ENCODE measurements at regions of chr1 and their contacts with region 1.

Region 1: DNA sequence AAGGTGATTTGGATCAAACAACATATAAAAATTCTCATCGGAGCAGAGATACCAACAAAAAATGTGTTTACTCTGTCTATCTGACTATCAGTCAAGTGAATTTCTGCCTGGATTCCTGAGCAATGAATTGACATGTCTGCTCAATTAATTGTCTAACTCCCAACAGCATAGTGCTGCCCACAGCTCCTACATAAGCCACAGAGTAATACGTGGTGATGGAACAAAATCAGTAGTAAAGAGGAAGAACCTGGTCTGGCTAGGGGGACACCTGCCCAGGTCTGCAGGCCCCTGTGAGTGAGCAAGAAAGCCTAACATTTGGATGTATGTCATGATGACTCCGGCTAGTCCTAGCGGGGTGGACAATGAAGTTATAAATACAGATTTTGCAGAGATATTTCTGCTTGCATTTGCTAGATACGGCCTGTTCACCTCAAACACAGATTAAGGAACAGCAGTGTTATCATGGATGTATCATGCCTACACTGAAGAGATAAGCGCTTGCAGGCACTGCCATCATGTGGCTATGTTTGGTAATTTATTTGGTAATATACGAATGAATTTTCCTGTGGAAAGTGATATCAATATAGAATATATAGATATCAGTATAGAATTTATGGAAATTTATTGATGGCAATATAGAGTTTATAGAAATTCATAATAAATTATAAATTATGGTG is 69.6 kb upstream of the LRRC8B start:
- DNase-seq: peak in 2 of 4 donors; percentile 18 to 49
- ATAC-seq: peak; percentile 95
- H3K4me3 ChIP-seq: no peak overlapping the region
- H3K27ac ChIP-seq: no peak overlapping the region
- H3K4me1 ChIP-seq: no peaks in the 10 kb centered on the region
- H3K27me3 ChIP-seq: no peaks in the 10 kb centered on the region
- CTCF ChIP-seq: peak; percentile 45 to 65

Region 2: DNA sequence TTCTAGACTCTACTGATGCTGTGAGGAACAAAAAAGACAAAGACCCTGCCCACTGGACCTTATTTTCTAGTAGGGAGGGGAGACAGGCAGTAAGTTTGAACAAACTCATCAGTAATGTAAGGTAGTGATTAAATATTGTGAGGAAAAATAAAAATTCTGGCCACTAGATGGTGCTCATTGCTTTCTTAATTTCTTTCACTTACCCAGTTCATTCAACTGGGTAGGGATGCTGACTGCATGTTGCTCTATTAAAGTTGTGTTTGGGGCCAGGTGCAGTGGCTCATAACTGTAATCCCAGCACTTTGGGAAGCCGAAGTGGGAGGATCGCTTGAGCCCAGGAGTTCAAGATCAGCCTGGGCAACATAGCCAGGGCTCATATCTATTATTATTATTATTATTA is 456.3 kb before region 1 on chr1:
- intact Hi-C with region 1: loop called in 1 of 2 experiments (anchors 5 kb)
- DNase-seq: peak in 2 of 4 donors; percentile 45 to 77
- ATAC-seq: peak; percentile 97
- H3K4me3 ChIP-seq: no peak overlapping the region
- H3K27ac ChIP-seq: no peak overlapping the region
- H3K4me1 ChIP-seq: peaks cover 0 to under 1% of the 10 kb centered on the region in 2 donors
- H3K27me3 ChIP-seq: no peaks in the 10 kb centered on the region
- CTCF ChIP-seq: peak; percentile 31 to 44

Region 3: DNA sequence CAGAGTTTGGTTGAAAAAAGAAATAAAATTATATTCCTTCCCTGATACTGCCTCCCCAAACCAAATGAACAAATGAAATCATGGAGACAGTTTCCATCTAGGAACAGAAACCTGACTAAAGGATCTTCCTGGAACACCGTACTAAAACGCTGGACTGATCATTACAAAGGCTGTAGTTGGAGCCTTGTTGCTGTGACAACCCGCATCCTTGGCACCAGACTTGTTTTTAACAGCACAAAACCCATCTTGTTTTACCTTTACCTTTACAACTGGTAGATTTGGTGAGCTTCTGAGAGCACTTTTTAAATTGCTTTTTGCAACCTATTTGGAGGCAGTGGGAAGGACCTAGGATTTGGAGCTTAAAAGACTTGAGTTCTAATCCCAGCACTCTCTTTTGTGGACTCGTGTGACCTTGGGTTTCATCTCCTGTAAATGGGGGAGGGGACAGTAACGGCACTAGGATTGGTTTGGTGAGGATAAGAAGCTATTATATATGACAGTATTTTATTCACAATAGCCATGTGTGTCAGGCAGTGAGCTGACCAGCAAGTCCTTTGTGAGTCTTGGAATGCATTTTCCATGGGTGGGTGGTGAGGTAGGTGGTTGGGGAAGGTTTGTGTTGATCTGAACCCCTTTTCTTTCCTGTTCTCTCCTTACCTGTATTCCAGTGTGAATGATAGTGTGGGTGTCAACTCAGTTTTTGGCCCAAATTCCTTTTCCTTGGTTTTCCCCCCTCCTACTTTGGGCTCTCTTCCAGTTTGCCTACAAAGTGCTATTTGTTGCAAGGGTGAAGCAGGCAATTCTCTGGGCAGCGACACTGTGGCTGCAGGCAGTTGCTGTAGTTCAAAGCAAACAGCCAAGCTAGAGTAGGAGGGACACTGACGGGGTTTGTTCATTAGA is 378.4 kb after region 1 on chr1:
- intact Hi-C with region 1: no loop called
- DNase-seq: no peak
- ATAC-seq: no peak
- H3K4me3 ChIP-seq: no peak overlapping the region
- H3K27ac ChIP-seq: no peak overlapping the region
- H3K4me1 ChIP-seq: peaks cover 0 to 27% of the 10 kb centered on the region in 2 donors
- H3K27me3 ChIP-seq: no peaks in the 10 kb centered on the region
- CTCF ChIP-seq: no peak